HepG2 (cell line): ENCODE measurements at regions of chr3 and their contacts with region 1.

Region 1: GRCh38 chr3:46947981-46948791 is 28.4 kb downstream of the CCDC12 start:
- DNase-seq: peak; percentile 88
- ATAC-seq: peak; percentile 57
- H3K4me3 ChIP-seq: peak overlapping the region in 1 of 3 experiments; percentile 39; a peak in 1 of 6 replicates
- H3K27ac ChIP-seq: peak overlapping the region; percentile 45
- H3K4me1 ChIP-seq: peaks cover 86% of the 10 kb centered on the region
- H3K27me3 ChIP-seq: no peaks in the 10 kb centered on the region
- CTCF ChIP-seq: no peak
- EP300 ChIP-seq: peak in 1 of 2 experiments; percentile 81; a peak in 2 of 4 replicates
- POLR2A ChIP-seq: no peak
- RAD21 ChIP-seq: no peak

Region 2: GRCh38 chr3:46935168-46935858 is 12.9 kb before region 1 on chr3:
- CTCF ChIA-PET with region 1: no interaction called
- POLR2A ChIA-PET with region 1: interaction called, 14 read pairs
- in situ Hi-C with region 1: no loop called
- intact Hi-C with region 1: no loop called
- DNase-seq: peak; percentile 92
- ATAC-seq: peak; percentile 90
- H3K4me3 ChIP-seq: no peak overlapping the region
- H3K27ac ChIP-seq: peak overlapping the region; percentile 12
- H3K4me1 ChIP-seq: peaks cover 92% of the 10 kb centered on the region
- H3K27me3 ChIP-seq: no peaks in the 10 kb centered on the region
- CTCF ChIP-seq: peak; percentile 64
- EP300 ChIP-seq: peak in 1 of 2 experiments; percentile 31; a peak in 1 of 4 replicates
- POLR2A ChIP-seq: no peak
- RAD21 ChIP-seq: peak; percentile 58

Region 3: GRCh38 chr3:46970391-46971091 is 22.4 kb after region 1 on chr3:
- CTCF ChIA-PET with region 1: no interaction called
- POLR2A ChIA-PET with region 1: interaction called, 34 read pairs
- in situ Hi-C with region 1: no loop called
- intact Hi-C with region 1: loop called (anchors 1 kb)
- DNase-seq: peak; percentile 96
- ATAC-seq: peak; percentile 90
- H3K4me3 ChIP-seq: peak overlapping the region in 1 of 3 experiments; percentile 57; a peak in 2 of 6 replicates
- H3K27ac ChIP-seq: peak overlapping the region; percentile 74
- H3K4me1 ChIP-seq: peaks cover 91% of the 10 kb centered on the region
- H3K27me3 ChIP-seq: no peaks in the 10 kb centered on the region
- CTCF ChIP-seq: peak; percentile 22
- EP300 ChIP-seq: peak in 1 of 2 experiments; percentile 80; a peak in 2 of 4 replicates
- POLR2A ChIP-seq: no peak
- RAD21 ChIP-seq: peak; percentile 44

Region 4: GRCh38 chr3:46976326-46977190 is 28.4 kb after region 1 on chr3 and contains the start of gene CCDC12:
- CTCF ChIA-PET with region 1: no interaction called
- POLR2A ChIA-PET with region 1: interaction called, 34 read pairs
- in situ Hi-C with region 1: no loop called
- intact Hi-C with region 1: no loop called
- DNase-seq: peak; percentile 98
- ATAC-seq: peak; percentile 79
- H3K4me3 ChIP-seq: peak within 1 kb of the TSS; percentile 69 to 98 (median 79); a peak in 5 of 6 replicates
- H3K27ac ChIP-seq: peak within 1 kb of the TSS; percentile 97
- H3K4me1 ChIP-seq: peaks cover 70% of the 10 kb centered on the region
- H3K27me3 ChIP-seq: no peaks in the 10 kb centered on the region; a peak in 1 of 5 replicates
- CTCF ChIP-seq: no peak
- EP300 ChIP-seq: no peak
- POLR2A ChIP-seq: peak in 1 of 2 experiments; percentile 85; a peak in 2 of 4 replicates
- RAD21 ChIP-seq: no peak
- total RNA-seq, gene CCDC12: 49.5 and 55.2 TPM in 2 replicates

Region 5: GRCh38 chr3:47016934-47017435 is 68.8 kb after region 1 on chr3:
- CTCF ChIA-PET with region 1: no interaction called
- POLR2A ChIA-PET with region 1: no interaction called
- in situ Hi-C with region 1: no loop called
- intact Hi-C with region 1: no loop called
- DNase-seq: no peak
- ATAC-seq: no peak
- H3K4me3 ChIP-seq: no peak overlapping the region
- H3K27ac ChIP-seq: no peak overlapping the region
- H3K4me1 ChIP-seq: peaks cover 48% of the 10 kb centered on the region
- H3K27me3 ChIP-seq: no peaks in the 10 kb centered on the region
- CTCF ChIP-seq: no peak
- EP300 ChIP-seq: no peak
- POLR2A ChIP-seq: no peak
- RAD21 ChIP-seq: no peak

Region 6: DNA sequence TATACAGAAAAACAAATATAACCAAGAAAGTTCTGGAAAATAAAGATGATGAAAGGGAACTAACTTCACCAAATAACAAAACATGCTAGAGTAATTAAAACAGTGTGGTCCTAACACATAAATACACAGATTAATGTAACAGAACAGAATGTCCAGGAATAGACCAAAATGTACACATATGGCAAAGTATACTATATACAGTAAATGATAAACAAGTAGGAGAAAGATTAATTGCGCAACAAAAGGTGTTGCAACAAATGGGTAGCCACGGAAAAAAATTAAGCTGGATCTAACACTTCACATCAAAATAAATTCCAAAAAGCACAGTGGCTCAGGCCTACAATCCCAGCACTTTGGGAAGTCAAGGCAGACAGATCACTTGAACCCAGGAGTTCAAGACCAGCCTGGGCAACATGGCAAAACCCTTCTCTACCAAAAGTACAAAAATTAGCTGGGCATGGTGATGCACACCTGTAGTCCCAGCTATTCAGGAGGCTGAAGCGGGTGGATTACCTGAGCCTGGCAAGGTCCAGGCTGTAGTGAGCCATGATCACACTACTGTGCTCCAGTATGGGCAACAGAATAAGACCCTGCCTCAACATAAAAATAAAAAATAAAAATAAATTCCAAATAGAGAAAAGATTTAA is 507.7 kb after region 1 on chr3:
- CTCF ChIA-PET with region 1: no interaction called
- POLR2A ChIA-PET with region 1: no interaction called
- in situ Hi-C with region 1: no loop called
- intact Hi-C with region 1: no loop called
- DNase-seq: no peak
- ATAC-seq: no peak
- H3K4me3 ChIP-seq: no peak overlapping the region
- H3K27ac ChIP-seq: no peak overlapping the region
- H3K4me1 ChIP-seq: peaks cover 48% of the 10 kb centered on the region
- H3K27me3 ChIP-seq: no peaks in the 10 kb centered on the region
- CTCF ChIP-seq: no peak
- EP300 ChIP-seq: no peak
- POLR2A ChIP-seq: no peak
- RAD21 ChIP-seq: no peak